Activated CD4-positive, alpha-beta T cell treated with anti-CD3 and anti-CD28 coated beads, Interleukin-2, amount 10 ng/mL, durations not matched to agents 24 days and 14 days (primary cell): ENCODE measurements at regions of chr2 and their contacts with region 1.

Region 1: GRCh38 chr2:36507408-36507812 is 90.6 kb downstream of the FEZ2 start:
- DNase-seq: peak; percentile 79
- H3K4me3 Mint-ChIP-seq: no peak overlapping the region
- H3K27ac Mint-ChIP-seq: no peak overlapping the region
- H3K4me1 Mint-ChIP-seq: no peaks in the 10 kb centered on the region
- H3K27me3 Mint-ChIP-seq: no peaks in the 10 kb centered on the region

Region 2: DNA sequence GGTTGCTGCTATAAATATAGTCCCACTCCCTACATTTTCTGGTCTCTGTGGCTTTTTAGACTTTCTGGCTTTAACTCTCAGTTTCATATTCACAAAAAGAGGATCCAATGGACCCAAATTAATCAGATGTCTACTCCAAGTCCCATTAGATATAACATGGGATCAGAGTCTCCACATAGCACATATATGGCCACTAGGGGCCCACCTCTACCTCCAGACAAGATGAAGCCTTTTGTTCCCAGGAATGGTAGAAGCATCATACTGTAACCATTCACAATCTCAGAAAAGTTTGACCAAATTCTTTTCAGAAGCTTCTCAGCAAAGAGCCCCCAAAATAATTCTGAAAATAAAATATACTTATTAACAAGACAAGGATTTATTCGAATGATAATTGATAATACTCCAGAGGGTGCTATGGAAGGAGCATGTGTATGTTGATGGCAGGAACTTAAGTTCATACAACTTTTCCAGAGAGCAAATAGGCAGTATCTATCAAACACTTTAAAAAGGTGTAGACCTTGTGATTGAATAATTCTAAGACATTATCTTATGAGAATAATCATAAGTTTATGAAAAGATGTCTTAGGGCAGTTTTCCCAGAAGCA is 534.2 kb before region 1 on chr2:
- intact Hi-C with region 1: loop called (anchors 5 kb)
- DNase-seq: no peak
- H3K4me3 Mint-ChIP-seq: no peak overlapping the region
- H3K27ac Mint-ChIP-seq: no peak overlapping the region
- H3K4me1 Mint-ChIP-seq: peaks cover 3% of the 10 kb centered on the region
- H3K27me3 Mint-ChIP-seq: peaks cover 16% of the 10 kb centered on the region